Vagina (tissue), 2 donors: ENCODE measurements at regions of chr11 and their contacts with region 1.

Region 1: GRCh38 chr11:70641369-70641768 is 243.0 kb downstream of the CTTN start:
- DNase-seq: no peak
- H3K4me3 ChIP-seq: no peak overlapping the region
- H3K27ac ChIP-seq: no peak overlapping the region
- H3K4me1 ChIP-seq: no peaks in the 10 kb centered on the region
- H3K27me3 ChIP-seq: no peaks in the 10 kb centered on the region
- CTCF ChIP-seq: no peak
- POLR2A ChIP-seq: no peak

Region 2: GRCh38 chr11:70699294-70700221 is 58.2 kb after region 1 on chr11:
- intact Hi-C with region 1: loop called (anchors 10 kb)
- DNase-seq: no peak
- H3K4me3 ChIP-seq: no peak overlapping the region
- H3K27ac ChIP-seq: no peak overlapping the region
- H3K4me1 ChIP-seq: no peaks in the 10 kb centered on the region
- H3K27me3 ChIP-seq: no peaks in the 10 kb centered on the region
- CTCF ChIP-seq: no peak
- POLR2A ChIP-seq: no peak